IMR-90 (cell line): ENCODE measurements at regions of chr12 and their contacts with region 1.

Region 1: GRCh38 chr12:47904713-47905310 is at the start of gene VDR:
- DNase-seq: peak; percentile 65
- ATAC-seq: peak; percentile 80
- H3K4me3 ChIP-seq: peak within 1 kb of the TSS; percentile 58
- H3K27ac ChIP-seq: peak within 1 kb of the TSS; percentile 8
- H3K4me1 ChIP-seq: peaks cover 16% of the 10 kb centered on the region
- H3K27me3 ChIP-seq: peaks cover 23% of the 10 kb centered on the region
- CTCF ChIP-seq: no peak; the same call in 1 of the 2 replicates
- POLR2A ChIP-seq: no peak
- RAD21 ChIP-seq: no peak
- total RNA-seq, gene VDR: 3.9 and 5.4 TPM in 2 replicates

Region 2: DNA sequence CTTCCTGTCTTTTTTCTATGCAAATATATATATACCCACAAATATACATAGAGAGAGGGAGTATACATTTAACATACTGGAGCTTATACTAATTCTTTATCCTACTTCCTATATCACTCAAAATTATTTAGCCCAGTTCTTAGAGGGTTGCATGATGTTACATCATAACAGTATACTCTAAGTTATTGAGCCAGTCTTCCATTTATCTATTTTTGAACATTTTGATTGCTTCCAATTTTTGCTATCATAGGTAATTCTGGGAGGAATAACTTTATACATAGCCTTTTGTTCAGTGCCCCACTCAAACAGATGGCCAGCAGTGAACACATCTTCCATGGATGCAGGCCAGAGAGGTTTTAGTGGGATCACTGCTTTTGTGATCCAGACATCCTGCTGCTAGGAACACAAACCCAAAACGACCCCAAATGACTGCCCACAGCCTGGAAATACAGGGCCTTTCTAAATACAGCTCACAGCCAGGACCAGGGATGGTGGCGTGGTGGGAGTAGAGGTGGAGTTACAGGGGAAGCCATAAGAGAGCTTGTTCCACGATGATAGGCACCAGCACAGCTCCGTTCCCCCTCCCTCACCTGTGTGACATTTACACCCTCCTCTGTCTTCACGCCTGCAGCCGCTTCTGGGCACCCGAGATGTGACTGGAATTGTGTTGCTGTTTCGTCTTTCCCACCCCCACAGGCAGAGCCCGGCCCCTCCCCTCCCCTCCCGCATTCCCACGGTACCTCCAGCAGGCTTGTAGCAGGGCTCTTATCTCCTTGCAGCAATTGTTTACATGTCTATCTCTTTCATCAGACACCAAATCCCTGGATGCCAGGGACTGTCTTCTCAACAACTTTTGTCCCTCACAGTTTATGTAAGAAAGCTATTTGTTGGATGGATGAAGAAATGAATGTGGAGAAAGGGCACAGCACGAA is 54.4 kb before region 1 on chr12:
- CTCF ChIA-PET with region 1: no interaction called
- POLR2A ChIA-PET with region 1: no interaction called
- dilution Hi-C with region 1: no loop called
- in situ Hi-C with region 1: no loop called
- intact Hi-C with region 1: loop called (anchors 5 kb)
- DNase-seq: peak; percentile 83
- ATAC-seq: peak; percentile 79
- H3K4me3 ChIP-seq: no peak overlapping the region
- H3K27ac ChIP-seq: peak overlapping the region; percentile 46; the same call in 1 of the 2 replicates
- H3K4me1 ChIP-seq: peaks cover 21% of the 10 kb centered on the region
- H3K27me3 ChIP-seq: no peaks in the 10 kb centered on the region
- CTCF ChIP-seq: no peak
- POLR2A ChIP-seq: no peak
- RAD21 ChIP-seq: no peak

Region 3: GRCh38 chr12:47881826-47882427 is 22.9 kb before region 1 on chr12:
- CTCF ChIA-PET with region 1: interaction called, 3 read pairs
- POLR2A ChIA-PET with region 1: no interaction called
- dilution Hi-C with region 1: no loop called
- in situ Hi-C with region 1: no loop called
- intact Hi-C with region 1: loop called (anchors 1 kb)
- DNase-seq: peak; percentile 97
- ATAC-seq: peak; percentile 95
- H3K4me3 ChIP-seq: no peak overlapping the region
- H3K27ac ChIP-seq: peak overlapping the region; percentile 75
- H3K4me1 ChIP-seq: peaks cover 24% of the 10 kb centered on the region
- H3K27me3 ChIP-seq: no peaks in the 10 kb centered on the region
- CTCF ChIP-seq: no peak
- POLR2A ChIP-seq: no peak
- RAD21 ChIP-seq: no peak; the same call in 1 of the 2 replicates

Region 4: DNA sequence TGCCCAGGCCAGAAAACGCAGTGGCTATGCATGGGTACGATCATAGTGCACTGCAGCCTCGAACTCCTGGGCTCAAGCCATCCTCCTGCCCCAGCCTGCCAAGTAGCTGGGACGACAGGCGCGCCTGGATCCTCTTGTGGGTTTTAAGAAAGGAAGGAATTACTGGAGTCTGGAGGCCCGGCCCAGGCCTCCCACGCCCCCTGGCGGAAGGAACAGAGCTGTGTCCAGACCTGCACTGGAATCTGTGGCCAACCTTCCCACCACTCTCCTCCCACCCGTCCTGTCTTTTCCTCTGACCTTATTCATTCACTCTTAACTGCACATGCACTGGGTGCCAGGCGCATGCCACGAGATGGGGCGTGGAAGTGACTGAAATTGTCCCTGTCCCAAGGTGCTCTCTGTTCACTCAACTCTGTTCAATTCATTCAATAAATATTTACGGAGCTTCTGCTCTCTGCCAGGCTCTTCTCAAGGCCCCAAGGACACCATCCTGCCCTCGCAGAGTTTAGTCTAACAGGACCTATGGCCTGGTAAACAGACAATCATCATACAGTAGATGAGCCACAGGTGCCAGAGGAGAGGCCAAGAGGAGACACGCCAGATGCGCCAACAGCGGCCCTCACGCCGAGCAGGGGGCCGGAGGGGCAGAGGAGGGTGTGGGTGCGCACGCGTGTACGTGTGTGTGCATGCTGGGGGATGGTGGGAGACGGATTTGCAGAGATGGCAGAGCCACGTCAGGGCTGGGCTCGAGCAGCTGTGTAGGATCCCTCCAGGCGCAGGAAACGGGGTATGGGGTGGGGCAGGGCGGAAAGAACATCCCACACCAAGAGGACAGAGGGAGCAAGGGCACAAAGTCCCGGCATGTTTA is 44.9 kb after region 1 on chr12:
- CTCF ChIA-PET with region 1: interaction called, 9 read pairs
- POLR2A ChIA-PET with region 1: no interaction called
- dilution Hi-C with region 1: no loop called
- in situ Hi-C with region 1: no loop called
- intact Hi-C with region 1: loop called (anchors 5 kb)
- DNase-seq: peak; percentile 72
- ATAC-seq: peak; percentile 90
- H3K4me3 ChIP-seq: no peak overlapping the region
- H3K27ac ChIP-seq: no peak overlapping the region
- H3K4me1 ChIP-seq: peaks cover 12% of the 10 kb centered on the region
- H3K27me3 ChIP-seq: peaks cover 20% of the 10 kb centered on the region
- CTCF ChIP-seq: peak; percentile 88
- POLR2A ChIP-seq: no peak
- RAD21 ChIP-seq: peak; percentile 88